Activated CD4-positive, alpha-beta T cell treated with anti-CD3 and anti-CD28 coated beads for 36 hours (primary cell): ENCODE measurements at regions of chr5 and their contacts with region 1.

Region 1: DNA sequence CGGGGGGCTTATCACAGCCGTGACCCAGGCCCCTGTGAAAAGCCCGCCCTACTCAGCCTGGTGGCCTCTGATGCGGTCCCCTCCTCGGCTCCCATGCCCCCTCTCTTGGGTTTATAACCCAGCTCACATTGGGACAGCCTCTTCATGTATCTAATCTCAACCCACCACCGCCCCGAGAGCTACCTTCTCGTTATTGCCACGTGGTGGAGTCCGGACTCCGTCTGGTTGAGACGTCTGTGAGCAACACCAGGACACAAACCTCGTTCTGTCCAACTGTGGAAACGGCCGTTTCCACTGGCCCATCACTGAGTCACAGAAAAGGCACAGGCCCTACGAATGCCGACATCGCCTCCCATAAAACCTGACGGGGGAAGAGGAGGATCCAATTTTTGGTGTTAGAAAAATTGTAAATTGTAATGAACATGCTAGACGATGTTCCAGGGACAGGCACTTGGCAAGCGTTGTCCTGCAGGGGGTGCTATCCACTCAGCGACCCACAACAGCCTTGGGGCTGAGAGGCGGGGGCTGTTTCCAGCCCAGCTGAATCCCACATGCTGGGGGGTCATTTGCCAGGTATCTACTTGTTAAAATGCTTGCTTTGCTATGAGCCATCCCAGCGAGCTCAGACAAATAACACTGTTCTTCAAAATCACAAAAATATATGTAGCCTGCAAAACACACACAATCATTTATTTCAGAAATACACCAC is 37.3 kb upstream of the N4BP3 start:
- DNase-seq: peak; percentile 90
- ATAC-seq: peak; percentile 91
- H3K4me3 Mint-ChIP-seq: peak overlapping the region; percentile 26
- H3K27ac Mint-ChIP-seq: no peak overlapping the region
- H3K4me1 Mint-ChIP-seq: peaks cover 3% of the 10 kb centered on the region
- H3K27me3 Mint-ChIP-seq: peaks cover 3% of the 10 kb centered on the region

Region 2: GRCh38 chr5:177997307-177997670 is 78.7 kb before region 1 on chr5:
- CTCF ChIA-PET with region 1: no interaction called
- POLR2A ChIA-PET with region 1: no interaction called
- intact Hi-C with region 1: no loop called
- DNase-seq: no peak
- ATAC-seq: no peak
- H3K4me3 Mint-ChIP-seq: no peak overlapping the region
- H3K27ac Mint-ChIP-seq: no peak overlapping the region
- H3K4me1 Mint-ChIP-seq: no peaks in the 10 kb centered on the region
- H3K27me3 Mint-ChIP-seq: peaks cover 20% of the 10 kb centered on the region

Region 3: DNA sequence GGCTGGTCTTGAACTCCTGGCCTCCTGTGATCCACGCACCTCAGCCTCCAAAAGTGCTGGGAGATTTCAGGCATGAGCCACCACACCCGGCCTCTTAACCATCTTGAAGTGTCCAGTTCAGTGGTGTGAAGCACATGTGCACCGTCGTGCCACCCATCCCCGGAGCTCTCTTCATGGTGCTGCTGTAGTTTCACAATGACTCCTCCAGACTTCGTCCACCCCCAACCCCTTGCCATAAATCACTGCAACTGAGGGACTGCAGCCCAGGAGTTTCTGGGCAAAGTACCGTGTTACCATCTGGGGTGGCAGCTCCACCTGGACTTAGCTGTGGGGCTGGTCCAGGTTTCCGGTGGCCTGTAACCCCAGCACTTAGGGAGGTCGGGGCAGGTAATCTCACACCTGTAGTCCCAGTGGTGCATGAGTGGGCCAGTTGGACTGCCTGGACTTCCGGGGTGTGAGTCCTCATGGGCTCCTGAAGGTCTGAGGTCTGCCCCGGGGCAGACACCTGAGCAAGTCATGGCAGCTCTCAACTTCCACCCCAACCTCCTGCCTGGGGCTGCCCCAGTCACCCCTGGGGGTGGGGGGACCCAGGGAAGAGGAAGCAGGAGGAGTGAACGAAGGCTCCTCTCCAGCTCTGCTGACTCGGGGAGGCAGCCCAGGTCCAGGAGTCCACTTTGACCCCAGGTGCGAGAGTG is 30.7 kb after region 1 on chr5:
- CTCF ChIA-PET with region 1: interaction called, 12 read pairs
- POLR2A ChIA-PET with region 1: no interaction called
- intact Hi-C with region 1: no loop called
- DNase-seq: no peak
- ATAC-seq: no peak
- H3K4me3 Mint-ChIP-seq: no peak overlapping the region
- H3K27ac Mint-ChIP-seq: no peak overlapping the region
- H3K4me1 Mint-ChIP-seq: peaks cover 8% of the 10 kb centered on the region
- H3K27me3 Mint-ChIP-seq: no peaks in the 10 kb centered on the region

Region 4: DNA sequence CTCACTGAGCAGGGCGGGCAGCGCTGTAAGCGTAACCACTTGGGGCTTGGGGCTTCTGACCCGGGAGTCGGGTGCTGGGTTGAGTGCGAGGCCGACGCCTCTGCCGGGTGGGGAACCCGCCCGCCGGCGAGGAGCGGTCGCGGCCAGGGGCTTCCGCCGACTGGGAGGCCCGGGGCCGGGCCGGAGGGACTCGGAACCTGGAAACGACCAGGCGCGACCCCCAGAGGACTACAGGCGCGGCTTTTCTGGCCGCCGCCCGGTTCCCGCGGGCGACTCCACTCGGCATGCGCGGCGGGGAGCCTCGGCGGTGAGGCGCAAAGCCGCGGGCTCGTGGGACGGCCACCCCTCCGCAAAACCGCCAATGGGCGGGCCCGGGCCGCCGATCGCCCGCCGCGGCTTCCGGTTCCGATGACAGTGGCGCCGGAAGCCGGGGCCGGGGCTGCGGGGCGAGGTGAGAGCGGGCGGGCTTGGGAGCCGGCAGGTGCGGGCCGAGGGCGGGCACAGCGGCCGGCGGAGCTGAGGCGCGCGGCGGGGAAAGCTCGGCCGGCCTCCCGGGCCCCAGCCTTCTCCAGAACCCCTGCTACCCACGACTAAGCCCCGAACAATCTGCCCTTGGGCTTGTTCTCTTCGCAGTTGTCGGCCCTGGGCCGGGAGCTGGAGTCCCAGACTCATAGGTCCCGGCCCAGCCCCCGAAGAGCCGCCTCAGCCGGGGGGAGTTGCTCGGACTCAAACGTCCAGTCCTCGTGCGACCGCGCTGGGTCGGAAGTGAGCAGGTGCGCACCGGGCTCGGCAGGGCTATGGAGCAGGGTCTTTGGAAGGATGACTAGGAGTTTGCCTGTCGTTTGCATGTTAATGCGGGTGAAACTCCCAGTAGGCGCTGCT is 54.9 kb after region 1 on chr5 and contains the start of gene RMND5B:
- CTCF ChIA-PET with region 1: interaction called, 11 read pairs
- POLR2A ChIA-PET with region 1: interaction called, 6 read pairs
- intact Hi-C with region 1: loop called in 1 of 2 experiments (anchors 5 kb)
- DNase-seq: peak; percentile 90
- ATAC-seq: peak; percentile 89
- H3K4me3 Mint-ChIP-seq: peak within 1 kb of the TSS; percentile 80
- H3K27ac Mint-ChIP-seq: peak within 1 kb of the TSS; percentile 90
- H3K4me1 Mint-ChIP-seq: peaks cover 25% of the 10 kb centered on the region
- H3K27me3 Mint-ChIP-seq: no peaks in the 10 kb centered on the region
- total RNA-seq, gene RMND5B: 24.1 to 28.7 TPM

Region 5: GRCh38 chr5:178146020-178146820 is 70.2 kb after region 1 on chr5:
- CTCF ChIA-PET with region 1: interaction called, 137 read pairs
- POLR2A ChIA-PET with region 1: interaction called, 4 read pairs
- intact Hi-C with region 1: loop called (anchors 1 kb)
- DNase-seq: peak; percentile 83
- ATAC-seq: peak; percentile 73
- H3K4me3 Mint-ChIP-seq: no peak overlapping the region
- H3K27ac Mint-ChIP-seq: peak overlapping the region; percentile 58
- H3K4me1 Mint-ChIP-seq: peaks cover 35% of the 10 kb centered on the region
- H3K27me3 Mint-ChIP-seq: no peaks in the 10 kb centered on the region

Region 6: DNA sequence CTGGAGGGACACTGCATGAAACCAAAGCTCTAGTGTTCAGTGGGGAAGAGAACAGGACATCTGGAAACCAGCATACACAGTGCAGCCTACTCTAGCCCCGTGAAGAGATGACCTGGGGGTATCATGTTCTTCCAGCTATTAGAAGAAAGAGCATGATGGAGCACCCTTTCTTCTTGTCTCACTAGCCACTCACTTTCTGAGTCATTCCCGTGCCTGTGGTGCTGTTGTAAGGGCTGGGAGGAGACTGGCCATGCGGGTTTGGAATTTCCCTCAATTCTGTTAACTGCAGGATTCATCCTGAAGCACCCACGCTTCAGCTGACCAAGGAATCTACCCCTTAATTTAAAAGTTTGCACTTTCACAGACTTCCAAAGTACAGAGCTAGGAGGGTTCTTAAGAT is 377.2 kb after region 1 on chr5:
- CTCF ChIA-PET with region 1: no interaction called
- POLR2A ChIA-PET with region 1: no interaction called
- intact Hi-C with region 1: no loop called
- DNase-seq: no peak
- ATAC-seq: no peak
- H3K4me3 Mint-ChIP-seq: no peak overlapping the region
- H3K27ac Mint-ChIP-seq: no peak overlapping the region
- H3K4me1 Mint-ChIP-seq: no peaks in the 10 kb centered on the region
- H3K27me3 Mint-ChIP-seq: peaks cover 4% of the 10 kb centered on the region